Heart right ventricle (tissue), 16 donors: ENCODE measurements at regions of chr11 and their contacts with region 1.

Region 1: GRCh38 chr11:109815500-109816150 is 277.6 kb upstream of the ZC3H12C start:
- DNase-seq: no peak
- ATAC-seq: no peak
- H3K4me3 ChIP-seq: no peak overlapping the region
- H3K27ac ChIP-seq: no peak overlapping the region
- H3K4me1 ChIP-seq: no peaks in the 10 kb centered on the region
- H3K27me3 ChIP-seq: no peaks in the 10 kb centered on the region
- CTCF ChIP-seq: no peak

Region 2: GRCh38 chr11:109877043-109877442 is 61.4 kb after region 1 on chr11:
- intact Hi-C with region 1: loop called in 1 of 10 experiments (anchors 2 kb)
- DNase-seq: no peak
- ATAC-seq: no peak
- H3K4me3 ChIP-seq: no peak overlapping the region
- H3K27ac ChIP-seq: no peak overlapping the region
- H3K4me1 ChIP-seq: no peaks in the 10 kb centered on the region
- H3K27me3 ChIP-seq: no peaks in the 10 kb centered on the region
- CTCF ChIP-seq: no peak